IMR-90 (cell line): ENCODE measurements at regions of chr18 and their contacts with region 1.

Region 1: GRCh38 chr18:59823596-59824195 is 76.1 kb upstream of the PMAIP1 start:
- DNase-seq: peak; percentile 80
- ATAC-seq: peak; percentile 96
- H3K4me3 ChIP-seq: no peak overlapping the region
- H3K27ac ChIP-seq: no peak overlapping the region
- H3K4me1 ChIP-seq: peaks cover 4% of the 10 kb centered on the region
- H3K27me3 ChIP-seq: no peaks in the 10 kb centered on the region; the same call in 1 of the 2 replicates
- CTCF ChIP-seq: peak; percentile 94
- POLR2A ChIP-seq: 0 out of 2 replicates have a peak, but pooled peaks have one; percentile 26
- RAD21 ChIP-seq: peak; percentile 97

Region 2: GRCh38 chr18:59308248-59308937 is 515.3 kb before region 1 on chr18:
- CTCF ChIA-PET with region 1: interaction called, 5 read pairs
- POLR2A ChIA-PET with region 1: no interaction called
- dilution Hi-C with region 1: no loop called
- in situ Hi-C with region 1: no loop called
- intact Hi-C with region 1: loop called (anchors 1 kb)
- DNase-seq: peak; percentile 45
- ATAC-seq: peak; percentile 100
- H3K4me3 ChIP-seq: peak overlapping the region; percentile 39
- H3K27ac ChIP-seq: no peak overlapping the region
- H3K4me1 ChIP-seq: peaks cover 2% of the 10 kb centered on the region; the same call in 1 of the 2 replicates
- H3K27me3 ChIP-seq: peaks cover 62% of the 10 kb centered on the region
- CTCF ChIP-seq: peak; percentile 80
- POLR2A ChIP-seq: no peak
- RAD21 ChIP-seq: peak; percentile 73

Region 3: GRCh38 chr18:59446012-59446411 is 377.7 kb before region 1 on chr18:
- CTCF ChIA-PET with region 1: interaction called, 4 read pairs
- POLR2A ChIA-PET with region 1: no interaction called
- dilution Hi-C with region 1: loop called (anchors 25 kb)
- in situ Hi-C with region 1: no loop called
- intact Hi-C with region 1: no loop called
- DNase-seq: peak; percentile 42
- ATAC-seq: peak; percentile 71
- H3K4me3 ChIP-seq: no peak overlapping the region
- H3K27ac ChIP-seq: no peak overlapping the region
- H3K4me1 ChIP-seq: no peaks in the 10 kb centered on the region
- H3K27me3 ChIP-seq: no peaks in the 10 kb centered on the region
- CTCF ChIP-seq: no peak
- POLR2A ChIP-seq: no peak
- RAD21 ChIP-seq: no peak

Region 4: DNA sequence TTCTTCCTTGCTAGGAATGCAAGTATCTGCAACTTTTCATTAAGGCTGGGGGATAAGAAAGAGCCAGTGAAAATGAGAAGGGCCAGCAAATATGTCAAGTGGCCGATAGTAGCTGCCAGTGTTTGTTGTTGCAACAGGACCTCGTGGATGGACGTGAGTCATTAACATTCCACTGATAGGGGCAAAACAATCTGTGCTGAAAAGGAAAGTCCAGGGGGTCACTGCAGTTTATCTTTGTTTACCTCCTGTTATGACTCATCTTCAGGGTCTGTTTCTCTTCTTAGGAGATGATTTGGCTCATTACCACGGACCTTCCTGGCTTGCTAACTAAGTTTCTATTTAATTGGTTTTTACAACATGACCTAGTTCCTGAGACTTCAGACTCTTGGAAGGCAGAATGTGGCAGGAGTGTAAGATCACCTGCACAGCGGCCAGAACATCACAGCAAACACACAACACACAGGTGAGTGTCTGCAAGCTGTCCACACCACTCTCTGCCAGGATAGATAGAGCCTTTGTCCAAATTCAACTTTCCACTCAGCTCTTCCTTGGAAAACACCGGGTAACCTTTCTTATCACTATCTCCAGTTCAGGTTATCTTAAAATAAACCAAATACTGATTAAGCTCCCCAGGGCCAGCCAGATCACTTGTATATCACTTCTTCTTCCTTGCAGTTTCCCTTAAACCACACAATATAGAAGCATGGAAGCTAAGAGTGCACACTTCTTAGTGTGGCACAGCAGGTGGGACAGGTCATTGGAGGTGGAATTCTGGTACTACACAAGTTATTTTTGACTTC is 307.1 kb before region 1 on chr18:
- CTCF ChIA-PET with region 1: interaction called, 4 read pairs
- POLR2A ChIA-PET with region 1: no interaction called
- dilution Hi-C with region 1: no loop called
- in situ Hi-C with region 1: no loop called
- intact Hi-C with region 1: loop called (anchors 1 kb)
- DNase-seq: peak; percentile 92
- ATAC-seq: peak; percentile 75
- H3K4me3 ChIP-seq: no peak overlapping the region
- H3K27ac ChIP-seq: peak overlapping the region; percentile 71; the same call in 1 of the 2 replicates
- H3K4me1 ChIP-seq: peaks cover 18% of the 10 kb centered on the region
- H3K27me3 ChIP-seq: no peaks in the 10 kb centered on the region
- CTCF ChIP-seq: no peak
- POLR2A ChIP-seq: no peak
- RAD21 ChIP-seq: no peak

Region 5: GRCh38 chr18:59697236-59697932 is 126.3 kb before region 1 on chr18 and contains the start of gene CCBE1:
- CTCF ChIA-PET with region 1: interaction called, 27 read pairs
- POLR2A ChIA-PET with region 1: interaction called, 6 read pairs
- dilution Hi-C with region 1: no loop called
- in situ Hi-C with region 1: loop called (anchors 5 kb)
- intact Hi-C with region 1: loop called (anchors 1 kb)
- DNase-seq: peak; percentile 71
- ATAC-seq: peak; percentile 82
- H3K4me3 ChIP-seq: peak within 1 kb of the TSS; percentile 71
- H3K27ac ChIP-seq: peak within 1 kb of the TSS; percentile 63
- H3K4me1 ChIP-seq: peaks cover 13% of the 10 kb centered on the region
- H3K27me3 ChIP-seq: no peaks in the 10 kb centered on the region
- CTCF ChIP-seq: peak; percentile 82
- POLR2A ChIP-seq: 0 out of 2 replicates have a peak, but pooled peaks have one; percentile 11
- RAD21 ChIP-seq: peak; percentile 75
- total RNA-seq, gene CCBE1: 93.9 and 148 TPM in 2 replicates